ENCODE measurements at regions of chr7 and their contacts with region 1.

Region 1: GRCh38 chr7:83655951-83656556 is 7.1 kb upstream of the SEMA3E start:
- DNase-seq: no peak
- ATAC-seq: peak; percentile 61 to 72
- H3K4me3 ChIP-seq: no peak overlapping the region
- H3K27ac ChIP-seq: no peak overlapping the region
- H3K4me1 ChIP-seq: no peaks in the 10 kb centered on the region
- H3K27me3 ChIP-seq: no peaks in the 10 kb centered on the region
- CTCF ChIP-seq: peak; percentile 53

Region 2: DNA sequence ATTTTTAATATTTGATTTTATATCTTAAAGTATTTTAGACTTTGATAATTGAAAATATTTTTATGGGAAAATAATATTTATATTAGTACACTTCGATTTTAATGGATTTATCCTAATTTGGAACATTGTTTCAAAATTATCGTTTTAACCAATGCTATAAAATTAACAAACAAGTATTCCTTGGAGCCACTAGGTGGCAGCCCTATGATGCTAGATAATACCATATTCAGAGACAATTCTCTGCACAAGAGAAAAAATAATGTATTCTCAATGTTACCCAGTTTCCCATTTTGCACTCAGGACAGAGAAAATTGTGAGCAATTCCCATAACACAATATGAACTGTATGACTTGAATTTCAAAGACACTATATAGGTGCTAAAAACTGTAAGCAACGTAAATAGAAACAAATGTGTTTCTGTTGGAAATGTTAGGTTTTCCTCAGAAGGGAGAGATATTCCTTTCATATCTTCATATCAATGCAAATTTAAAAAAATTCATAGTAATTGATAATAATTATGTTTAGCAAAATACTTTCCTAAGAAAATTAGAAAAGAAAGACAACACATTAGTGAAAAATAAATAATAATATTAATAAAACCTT is 245.0 kb before region 1 on chr7:
- intact Hi-C with region 1: loop called (anchors 10 kb)
- DNase-seq: no peak
- ATAC-seq: peak in 1 of 2 donors; percentile 48
- H3K4me3 ChIP-seq: no peak overlapping the region
- H3K27ac ChIP-seq: no peak overlapping the region
- H3K4me1 ChIP-seq: no peaks in the 10 kb centered on the region
- H3K27me3 ChIP-seq: no peaks in the 10 kb centered on the region
- CTCF ChIP-seq: peak; percentile 49

Region 3: DNA sequence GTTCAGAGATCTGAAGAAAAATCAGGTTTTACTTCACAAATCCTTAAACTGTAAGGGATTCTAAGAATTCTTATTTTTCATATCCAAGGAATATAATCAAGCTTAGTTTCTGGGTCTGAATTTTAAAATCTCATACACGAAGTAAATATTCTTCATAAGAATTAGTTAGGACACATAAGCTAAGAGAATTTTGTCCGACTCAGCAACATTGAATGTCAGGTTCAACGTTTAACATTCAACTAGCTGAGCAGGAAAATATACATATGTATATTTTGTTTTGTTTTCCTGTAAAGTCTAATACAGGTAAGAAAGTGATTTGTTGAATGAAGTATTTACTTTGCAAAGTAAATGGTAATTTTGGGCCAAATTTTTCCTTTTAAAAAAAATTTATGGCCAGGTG is 99.5 kb after region 1 on chr7:
- intact Hi-C with region 1: no loop called
- DNase-seq: no peak
- ATAC-seq: no peak
- H3K4me3 ChIP-seq: no peak overlapping the region
- H3K27ac ChIP-seq: no peak overlapping the region
- H3K4me1 ChIP-seq: no peaks in the 10 kb centered on the region
- H3K27me3 ChIP-seq: no peaks in the 10 kb centered on the region
- CTCF ChIP-seq: no peak

Measured in lower lobe of right lung (tissue), 2 donors.